ENCODE measurements at regions of chr19 and their contacts with region 1.

Region 1: DNA sequence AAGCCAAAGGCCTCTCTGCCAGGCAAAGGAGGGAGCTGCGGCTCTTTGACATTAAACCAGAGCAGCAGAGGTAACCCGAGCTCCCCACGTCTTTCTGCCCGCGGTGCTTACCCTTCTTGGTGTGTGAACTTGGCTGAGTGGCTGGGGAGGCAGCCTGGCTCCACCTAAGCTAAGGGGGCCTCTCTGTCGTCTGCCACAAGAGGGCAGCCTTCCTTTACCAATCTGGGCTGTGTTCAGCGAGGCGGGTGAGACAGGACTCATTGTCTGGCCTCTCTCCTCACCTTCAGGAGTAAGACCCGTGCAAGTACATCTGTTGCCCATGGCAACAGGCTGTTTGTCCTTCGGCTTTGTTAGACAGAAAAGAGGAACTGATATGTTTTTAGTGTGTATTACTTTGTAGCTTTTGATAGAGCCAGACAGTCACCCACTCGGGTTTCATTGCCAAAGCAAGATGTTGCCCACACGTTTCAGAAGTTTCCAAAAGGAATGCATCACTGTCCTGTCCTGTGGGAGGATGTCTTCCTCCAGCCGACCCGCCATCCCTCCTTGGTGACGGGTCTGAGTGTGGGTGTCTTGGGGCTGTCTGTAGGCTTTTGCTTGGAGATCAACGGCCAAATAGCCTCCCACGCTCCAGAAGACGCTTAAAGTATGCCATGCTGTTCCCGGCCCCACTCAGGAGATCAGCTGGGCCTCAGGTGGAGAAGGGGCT is 4.6 kb downstream of the POP4 start:
- DNase-seq: peak; percentile 82 to 88
- H3K4me3 ChIP-seq: no peak overlapping the region
- H3K27ac ChIP-seq: no peak overlapping the region
- H3K4me1 ChIP-seq: no peaks in the 10 kb centered on the region; a peak in 2 of 7 replicates
- H3K27me3 ChIP-seq: no peaks in the 10 kb centered on the region
- CTCF ChIP-seq: peak; percentile 94 to 98 (median 95)
- EP300 ChIP-seq: no peak
- POLR2A ChIP-seq: no peak
- RAD21 ChIP-seq: peak; percentile 95 to 96

Region 2: GRCh38 chr19:29622138-29623070 is 11.7 kb after region 1 on chr19:
- CTCF ChIA-PET with region 1: interaction called, 109 read pairs
- POLR2A ChIA-PET with region 1: interaction called, 12 read pairs
- DNase-seq: no peak
- H3K4me3 ChIP-seq: no peak overlapping the region
- H3K27ac ChIP-seq: no peak overlapping the region
- H3K4me1 ChIP-seq: peaks cover 2 to 8% (median 5%) of the 10 kb centered on the region in 4 experiments; a peak in 6 of 7 replicates
- H3K27me3 ChIP-seq: peaks cover 0 to 2% (median 0%) of the 10 kb centered on the region in 4 experiments; a peak in 2 of 7 replicates
- CTCF ChIP-seq: no peak
- EP300 ChIP-seq: no peak
- POLR2A ChIP-seq: no peak
- RAD21 ChIP-seq: no peak

Region 3: DNA sequence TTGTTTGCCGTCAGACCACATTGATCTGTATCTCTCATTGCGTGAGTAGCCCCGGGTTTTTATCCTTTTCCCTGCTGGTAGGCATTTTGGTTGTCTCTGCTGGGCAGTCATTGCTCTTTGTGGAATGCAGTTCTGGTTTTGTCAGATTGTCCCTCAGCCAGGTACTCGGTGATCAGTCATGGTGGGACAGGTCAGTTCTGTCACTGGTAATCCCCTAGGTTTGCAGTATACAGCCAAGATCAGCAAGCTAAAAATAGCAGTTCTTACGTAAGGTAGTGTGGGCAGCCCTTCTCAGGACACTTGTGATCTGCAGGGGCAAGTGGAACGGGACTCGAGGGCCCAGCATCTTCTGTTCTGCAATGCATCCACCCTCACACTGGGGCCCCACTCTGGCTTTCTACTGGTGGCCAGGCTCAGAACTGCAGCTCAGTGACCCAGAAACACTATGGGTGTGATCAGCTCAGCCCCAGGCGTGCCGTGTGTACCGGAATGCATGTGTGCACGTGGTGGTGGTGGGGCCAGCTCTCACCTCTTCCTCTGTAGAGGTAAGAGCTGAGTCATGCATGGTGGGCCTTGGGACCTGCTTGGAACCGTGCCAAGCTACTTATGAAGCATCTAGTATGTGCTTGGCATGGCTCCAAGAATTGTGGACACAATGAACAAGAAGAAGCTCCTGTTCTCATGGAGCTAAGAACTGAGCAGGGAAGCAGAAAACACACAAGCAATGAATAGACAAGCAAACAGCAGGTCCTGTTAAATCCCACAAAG is 60.9 kb after region 1 on chr19:
- CTCF ChIA-PET with region 1: interaction called, 79 read pairs
- POLR2A ChIA-PET with region 1: interaction called, 6 read pairs
- DNase-seq: no peak
- H3K4me3 ChIP-seq: no peak overlapping the region
- H3K27ac ChIP-seq: 0 out of 2 replicates have a peak overlapping the region, but pooled peaks have one; percentile 8
- H3K4me1 ChIP-seq: peaks cover 0 to 21% (median 14%) of the 10 kb centered on the region in 4 experiments; a peak in 6 of 7 replicates
- H3K27me3 ChIP-seq: no peaks in the 10 kb centered on the region
- CTCF ChIP-seq: peak; percentile 11 to 28 (median 17); a peak in 2 of 4 replicates
- EP300 ChIP-seq: no peak
- POLR2A ChIP-seq: no peak
- RAD21 ChIP-seq: no peak; a peak in 1 of 4 replicates

Region 4: DNA sequence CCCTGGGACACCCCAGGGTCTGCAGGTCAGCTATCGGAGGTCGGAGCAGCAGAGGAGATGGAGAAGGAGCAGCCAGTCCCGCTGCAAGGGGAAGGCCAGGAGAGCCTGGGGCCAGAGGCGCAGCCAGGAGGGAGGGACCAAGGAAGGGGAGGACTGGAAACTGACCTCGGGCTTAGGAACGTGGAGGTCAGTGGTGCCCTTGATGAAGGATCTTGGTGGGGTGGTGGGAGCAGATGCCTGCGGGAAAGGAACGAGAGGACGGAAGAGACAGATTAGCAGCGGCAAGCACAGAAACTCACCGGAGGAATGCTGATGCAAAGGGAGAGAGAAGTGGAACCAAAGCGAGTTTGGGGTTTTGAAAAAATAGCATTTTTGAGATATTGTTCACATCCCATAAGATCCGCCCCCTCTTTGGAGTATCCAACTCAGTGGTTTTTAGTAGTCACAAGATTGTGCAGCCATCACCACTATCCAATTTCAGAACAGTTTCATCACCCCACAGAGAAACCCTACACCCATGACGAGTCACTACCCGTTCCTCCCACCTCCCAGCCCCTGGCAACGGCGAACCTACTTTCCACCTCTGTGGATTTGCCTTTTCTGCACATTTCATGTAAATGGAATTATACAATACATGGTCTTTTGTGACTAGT is 76.7 kb after region 1 on chr19:
- CTCF ChIA-PET with region 1: interaction called, 67 read pairs
- POLR2A ChIA-PET with region 1: interaction called, 3 read pairs
- DNase-seq: no peak
- H3K4me3 ChIP-seq: no peak overlapping the region
- H3K27ac ChIP-seq: no peak overlapping the region
- H3K4me1 ChIP-seq: peaks cover 0 to 6% (median 0%) of the 10 kb centered on the region in 4 experiments; a peak in 1 of 7 replicates
- H3K27me3 ChIP-seq: no peaks in the 10 kb centered on the region; a peak in 1 of 7 replicates
- CTCF ChIP-seq: no peak
- EP300 ChIP-seq: no peak
- POLR2A ChIP-seq: no peak
- RAD21 ChIP-seq: no peak

Region 5: DNA sequence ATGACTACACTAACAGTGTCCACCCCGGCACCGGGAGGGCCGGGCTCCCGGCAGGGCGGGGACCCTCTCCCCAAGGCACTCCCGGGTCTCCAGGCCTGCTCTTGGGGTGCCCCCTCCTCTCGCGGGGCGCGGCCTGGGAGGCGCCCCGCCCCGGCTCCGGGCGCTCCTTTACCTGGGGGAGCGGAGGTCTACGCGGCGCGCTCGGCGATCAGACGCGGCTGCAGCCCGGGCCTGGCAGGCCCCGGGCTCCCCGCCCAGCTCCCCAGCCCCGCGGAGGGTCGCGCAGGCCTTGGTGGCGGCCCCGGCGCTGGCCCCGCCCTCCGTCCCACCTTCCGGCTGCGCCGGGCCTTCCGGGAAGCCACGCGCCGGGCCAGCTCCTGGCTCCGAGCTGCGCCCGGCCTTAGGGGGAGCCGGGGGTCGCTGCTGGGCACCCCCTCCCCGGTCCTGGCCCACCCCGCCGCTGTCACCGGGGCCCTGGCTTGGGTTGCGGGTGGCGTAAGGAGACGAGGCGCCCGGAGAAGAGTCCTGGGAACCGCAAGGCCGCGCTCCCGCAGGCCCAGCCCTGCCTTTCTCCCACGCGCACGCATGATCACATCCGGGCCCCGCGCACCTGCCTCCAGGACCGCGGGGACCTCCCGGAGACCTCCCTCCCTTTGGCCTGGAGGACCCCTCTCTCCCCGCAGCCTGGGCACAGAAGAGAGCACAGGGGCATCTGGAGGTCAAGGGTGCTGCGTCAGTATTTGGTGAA is 104.4 kb after region 1 on chr19 and contains the start of gene C19orf12:
- CTCF ChIA-PET with region 1: interaction called, 52 read pairs
- POLR2A ChIA-PET with region 1: interaction called, 4 read pairs
- DNase-seq: peak in 1 of 2 experiments; percentile 77
- H3K4me3 ChIP-seq: peak within 1 kb of the TSS; percentile 62 to 75 (median 66)
- H3K27ac ChIP-seq: peak within 1 kb of the TSS; percentile 47; the same call in 1 of the 2 replicates
- H3K4me1 ChIP-seq: peaks cover 0 to 4% (median 2%) of the 10 kb centered on the region in 4 experiments; a peak in 3 of 7 replicates
- H3K27me3 ChIP-seq: no peaks in the 10 kb centered on the region
- CTCF ChIP-seq: no peak
- EP300 ChIP-seq: no peak
- POLR2A ChIP-seq: peak in 1 of 2 experiments; percentile 71; a peak in 2 of 3 replicates
- RAD21 ChIP-seq: no peak
- total RNA-seq, gene C19orf12: 11.9 and 14.5 TPM in 2 replicates